Endothelial cell of umbilical vein (primary cell): ENCODE measurements at regions of chr1 and their contacts with region 1.

Region 1: GRCh38 chr1:26993237-26994019 is at the start of gene TRNP1:
- DNase-seq: peak; percentile 50
- H3K4me3 ChIP-seq: peak within 1 kb of the TSS; percentile 43 to 61 (median 51)
- H3K27ac ChIP-seq: no peak within 1 kb of the TSS
- H3K4me1 ChIP-seq: peaks cover 42% of the 10 kb centered on the region
- H3K27me3 ChIP-seq: no peaks in the 10 kb centered on the region
- CTCF ChIP-seq: no peak
- POLR2A ChIP-seq: peak; percentile 89
- total RNA-seq, gene TRNP1: 5.9 and 10.3 TPM in 2 replicates

Region 2: DNA sequence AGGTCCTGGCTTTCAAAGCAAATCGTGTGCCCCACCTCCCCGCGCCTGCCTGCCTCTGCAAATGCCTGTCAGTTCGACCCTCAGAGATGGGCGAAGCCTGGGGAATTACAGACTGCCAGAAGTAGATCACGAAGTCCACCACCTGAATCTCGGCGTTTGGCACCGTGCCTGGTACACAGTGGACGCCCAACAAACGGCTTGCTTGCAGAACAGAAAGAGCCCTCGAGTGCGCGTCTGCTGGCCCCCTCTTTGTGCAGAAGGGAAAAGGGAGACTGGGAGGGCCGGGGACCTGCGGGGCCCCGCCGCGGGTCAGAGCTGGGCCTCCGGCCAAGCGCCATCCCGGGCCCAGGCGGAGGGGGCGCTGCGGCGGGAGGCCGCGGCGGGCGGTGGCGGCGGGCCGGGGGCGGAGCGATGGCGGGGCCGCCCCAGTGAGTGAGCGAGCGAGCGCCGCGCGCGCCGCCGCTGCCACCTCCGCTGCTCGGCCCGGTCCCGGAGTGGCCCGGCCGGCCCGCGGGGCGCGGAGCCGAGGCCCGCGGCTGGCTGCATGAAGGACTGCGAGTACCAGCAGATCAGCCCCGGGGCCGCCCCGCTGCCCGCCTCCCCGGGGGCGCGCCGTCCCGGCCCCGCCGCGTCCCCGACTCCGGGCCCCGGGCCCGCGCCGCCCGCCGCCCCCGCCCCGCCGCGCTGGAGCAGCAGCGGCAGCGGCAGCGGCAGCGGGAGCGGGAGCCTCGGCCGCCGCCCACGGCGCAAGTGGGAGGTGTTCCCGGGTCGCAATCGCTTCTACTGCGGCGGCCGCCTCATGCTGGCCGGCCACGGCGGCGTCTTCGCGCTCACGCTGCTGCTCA is 166.9 kb before region 1 on chr1 and contains the start of gene ZDHHC18:
- CTCF ChIA-PET with region 1: no interaction called
- POLR2A ChIA-PET with region 1: no interaction called
- dilution Hi-C with region 1: no loop called
- intact Hi-C with region 1: loop called (anchors 1 kb)
- DNase-seq: peak; percentile 49
- H3K4me3 ChIP-seq: peak within 1 kb of the TSS; percentile 60 to 93 (median 73)
- H3K27ac ChIP-seq: no peak within 1 kb of the TSS
- H3K4me1 ChIP-seq: peaks cover 11% of the 10 kb centered on the region
- H3K27me3 ChIP-seq: no peaks in the 10 kb centered on the region
- CTCF ChIP-seq: peak; percentile 37 to 47
- POLR2A ChIP-seq: peak; percentile 72
- total RNA-seq, gene ZDHHC18: 24.0 and 25.2 TPM in 2 replicates

Region 3: GRCh38 chr1:26961826-26962225 is 31.6 kb before region 1 on chr1:
- CTCF ChIA-PET with region 1: interaction called, 109 read pairs
- POLR2A ChIA-PET with region 1: interaction called, 3 read pairs
- dilution Hi-C with region 1: no loop called
- intact Hi-C with region 1: loop called (anchors 1 kb)
- DNase-seq: peak; percentile 70
- H3K4me3 ChIP-seq: no peak overlapping the region
- H3K27ac ChIP-seq: no peak overlapping the region
- H3K4me1 ChIP-seq: peaks cover 16% of the 10 kb centered on the region
- H3K27me3 ChIP-seq: peaks cover 22 to 24% of the 10 kb centered on the region in 2 experiments
- CTCF ChIP-seq: no peak
- POLR2A ChIP-seq: no peak

Region 4: GRCh38 chr1:26970810-26971209 is 22.6 kb before region 1 on chr1:
- CTCF ChIA-PET with region 1: interaction called, 109 read pairs
- POLR2A ChIA-PET with region 1: no interaction called
- dilution Hi-C with region 1: no loop called
- intact Hi-C with region 1: loop called (anchors 1 kb)
- DNase-seq: no peak
- H3K4me3 ChIP-seq: no peak overlapping the region
- H3K27ac ChIP-seq: no peak overlapping the region
- H3K4me1 ChIP-seq: no peaks in the 10 kb centered on the region
- H3K27me3 ChIP-seq: peaks cover 0 to 4% of the 10 kb centered on the region in 2 experiments
- CTCF ChIP-seq: no peak
- POLR2A ChIP-seq: no peak

Region 5: DNA sequence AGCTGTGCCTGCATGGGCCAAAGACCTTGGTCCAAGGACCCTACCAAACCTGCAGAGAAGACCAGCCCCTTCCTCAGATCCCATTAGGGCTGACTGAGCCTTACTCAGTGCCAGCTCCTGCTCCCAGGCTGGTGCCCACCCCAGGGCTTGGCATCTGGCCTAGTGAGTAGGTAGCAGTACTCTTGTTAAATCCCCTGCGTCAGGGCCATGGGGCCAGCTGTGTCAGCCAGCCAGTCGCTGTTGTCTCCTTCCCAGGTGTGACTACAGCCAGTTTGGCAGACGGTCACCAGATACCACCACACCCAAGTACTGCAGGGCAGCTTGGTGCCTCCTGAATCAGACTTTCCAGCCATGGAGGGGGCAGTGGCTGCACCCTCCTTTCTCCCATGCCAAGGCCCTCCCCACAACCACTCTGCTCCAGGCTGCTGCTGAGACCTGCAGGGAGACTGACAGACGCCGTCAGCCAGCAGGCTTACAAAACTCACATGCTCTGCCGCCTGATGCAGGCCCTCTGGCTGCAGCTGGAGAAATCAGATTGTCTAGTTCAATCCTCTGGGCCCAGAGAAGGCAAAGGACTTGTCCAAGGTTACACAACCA is 16.3 kb after region 1 on chr1:
- CTCF ChIA-PET with region 1: interaction called, 25 read pairs
- POLR2A ChIA-PET with region 1: interaction called, 3 read pairs
- dilution Hi-C with region 1: no loop called
- intact Hi-C with region 1: loop called (anchors 2 kb)
- DNase-seq: no peak
- H3K4me3 ChIP-seq: no peak overlapping the region
- H3K27ac ChIP-seq: no peak overlapping the region
- H3K4me1 ChIP-seq: peaks cover 8% of the 10 kb centered on the region
- H3K27me3 ChIP-seq: no peaks in the 10 kb centered on the region
- CTCF ChIP-seq: no peak
- POLR2A ChIP-seq: no peak

Region 6: DNA sequence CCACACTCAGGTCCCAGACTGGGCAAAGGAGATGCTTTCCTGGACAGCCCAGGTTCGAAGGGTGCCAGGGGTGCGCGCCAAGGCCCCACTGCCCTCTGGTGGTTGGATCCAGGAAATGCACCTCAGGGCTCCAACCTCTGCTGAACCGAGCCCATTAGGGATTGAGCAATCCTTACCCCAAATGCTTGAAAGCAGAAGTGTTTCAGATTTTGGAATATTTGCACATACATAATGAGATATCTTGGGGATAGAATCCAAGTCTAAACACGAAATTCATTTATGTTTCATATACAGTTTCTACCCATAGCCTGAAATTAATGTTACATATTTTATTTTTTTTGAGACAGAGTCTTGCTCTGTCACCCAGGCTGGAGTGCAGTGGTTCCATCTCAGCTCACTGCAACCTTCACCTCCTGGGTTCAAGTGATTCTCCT is 104.1 kb after region 1 on chr1:
- CTCF ChIA-PET with region 1: interaction called, 121 read pairs
- POLR2A ChIA-PET with region 1: no interaction called
- dilution Hi-C with region 1: no loop called
- intact Hi-C with region 1: loop called (anchors 1 kb)
- DNase-seq: peak; percentile 64
- H3K4me3 ChIP-seq: no peak overlapping the region
- H3K27ac ChIP-seq: no peak overlapping the region
- H3K4me1 ChIP-seq: no peaks in the 10 kb centered on the region
- H3K27me3 ChIP-seq: no peaks in the 10 kb centered on the region
- CTCF ChIP-seq: peak; percentile 89 to 91
- POLR2A ChIP-seq: no peak